PC-9 (cell line): ENCODE measurements at regions of chr12 and their contacts with region 1.

Region 1: GRCh38 chr12:28998637-28999120 is 150.4 kb upstream of the FAR2 start:
- DNase-seq: peak in 1 of 2 experiments; percentile 35
- H3K4me3 ChIP-seq: no peak overlapping the region
- H3K27ac ChIP-seq: no peak overlapping the region
- H3K4me1 ChIP-seq: no peaks in the 10 kb centered on the region
- H3K27me3 ChIP-seq: no peaks in the 10 kb centered on the region
- CTCF ChIP-seq: peak; percentile 73

Region 2: DNA sequence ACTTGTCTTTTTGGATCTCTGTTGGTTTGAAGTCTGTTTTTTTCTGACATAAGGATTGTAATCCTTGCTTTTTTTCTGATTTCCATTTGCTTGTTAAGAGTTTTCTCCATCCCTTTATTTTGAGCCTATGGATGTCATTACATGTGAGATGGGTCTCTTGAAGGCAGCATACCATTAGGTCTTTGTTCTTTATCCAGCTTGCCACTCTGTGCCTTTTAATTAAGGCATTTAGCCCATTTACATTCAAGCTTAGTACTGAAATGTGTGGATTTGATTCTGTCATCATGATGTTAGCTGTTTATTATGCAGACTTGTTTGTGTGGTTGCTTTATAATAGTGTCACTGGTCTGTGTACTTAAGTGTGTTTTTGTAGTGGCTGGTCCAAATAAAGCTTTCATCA is 708.4 kb before region 1 on chr12:
- CTCF ChIA-PET with region 1: no interaction called
- POLR2A ChIA-PET with region 1: no interaction called
- intact Hi-C with region 1: no loop called
- DNase-seq: no peak
- H3K4me3 ChIP-seq: no peak overlapping the region
- H3K27ac ChIP-seq: no peak overlapping the region
- H3K4me1 ChIP-seq: no peaks in the 10 kb centered on the region
- H3K27me3 ChIP-seq: no peaks in the 10 kb centered on the region
- CTCF ChIP-seq: no peak

Region 3: GRCh38 chr12:28369483-28369882 is 629.2 kb before region 1 on chr12:
- CTCF ChIA-PET with region 1: no interaction called
- POLR2A ChIA-PET with region 1: no interaction called
- intact Hi-C with region 1: loop called (anchors 10 kb)
- DNase-seq: no peak
- H3K4me3 ChIP-seq: no peak overlapping the region
- H3K27ac ChIP-seq: no peak overlapping the region
- H3K4me1 ChIP-seq: no peaks in the 10 kb centered on the region
- H3K27me3 ChIP-seq: no peaks in the 10 kb centered on the region
- CTCF ChIP-seq: no peak

Region 4: GRCh38 chr12:28882444-28882843 is 116.2 kb before region 1 on chr12:
- CTCF ChIA-PET with region 1: no interaction called
- POLR2A ChIA-PET with region 1: no interaction called
- intact Hi-C with region 1: loop called (anchors 10 kb)
- DNase-seq: no peak
- H3K4me3 ChIP-seq: no peak overlapping the region
- H3K27ac ChIP-seq: no peak overlapping the region
- H3K4me1 ChIP-seq: no peaks in the 10 kb centered on the region
- H3K27me3 ChIP-seq: no peaks in the 10 kb centered on the region
- CTCF ChIP-seq: no peak